ENCODE measurements at regions of chr2 and their contacts with region 1.

Region 1: DNA sequence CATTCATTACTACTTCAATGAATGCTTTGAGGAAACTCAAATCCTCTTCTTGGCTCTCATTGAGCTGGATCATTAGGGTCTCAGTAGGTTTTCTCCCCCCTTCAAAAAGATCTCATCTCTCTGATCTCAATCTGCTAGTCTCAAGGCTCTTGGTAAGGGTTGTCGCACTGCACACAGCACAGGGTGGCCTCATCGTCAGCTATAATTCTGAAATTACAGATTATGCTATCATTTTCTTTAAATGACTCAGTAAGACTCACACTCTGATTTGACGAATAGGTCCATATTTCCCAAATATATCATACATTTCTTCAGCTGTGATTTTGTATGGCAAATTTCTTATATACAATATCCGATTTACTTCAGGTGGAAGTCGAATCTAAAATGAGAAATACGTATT is 2.3 kb downstream of the SF3B6 start:
- DNase-seq: no peak
- H3K4me3 Mint-ChIP-seq: no peak overlapping the region
- H3K27ac Mint-ChIP-seq: no peak overlapping the region
- H3K4me1 Mint-ChIP-seq: peaks cover 36% of the 10 kb centered on the region
- H3K27me3 Mint-ChIP-seq: no peaks in the 10 kb centered on the region

Region 2: DNA sequence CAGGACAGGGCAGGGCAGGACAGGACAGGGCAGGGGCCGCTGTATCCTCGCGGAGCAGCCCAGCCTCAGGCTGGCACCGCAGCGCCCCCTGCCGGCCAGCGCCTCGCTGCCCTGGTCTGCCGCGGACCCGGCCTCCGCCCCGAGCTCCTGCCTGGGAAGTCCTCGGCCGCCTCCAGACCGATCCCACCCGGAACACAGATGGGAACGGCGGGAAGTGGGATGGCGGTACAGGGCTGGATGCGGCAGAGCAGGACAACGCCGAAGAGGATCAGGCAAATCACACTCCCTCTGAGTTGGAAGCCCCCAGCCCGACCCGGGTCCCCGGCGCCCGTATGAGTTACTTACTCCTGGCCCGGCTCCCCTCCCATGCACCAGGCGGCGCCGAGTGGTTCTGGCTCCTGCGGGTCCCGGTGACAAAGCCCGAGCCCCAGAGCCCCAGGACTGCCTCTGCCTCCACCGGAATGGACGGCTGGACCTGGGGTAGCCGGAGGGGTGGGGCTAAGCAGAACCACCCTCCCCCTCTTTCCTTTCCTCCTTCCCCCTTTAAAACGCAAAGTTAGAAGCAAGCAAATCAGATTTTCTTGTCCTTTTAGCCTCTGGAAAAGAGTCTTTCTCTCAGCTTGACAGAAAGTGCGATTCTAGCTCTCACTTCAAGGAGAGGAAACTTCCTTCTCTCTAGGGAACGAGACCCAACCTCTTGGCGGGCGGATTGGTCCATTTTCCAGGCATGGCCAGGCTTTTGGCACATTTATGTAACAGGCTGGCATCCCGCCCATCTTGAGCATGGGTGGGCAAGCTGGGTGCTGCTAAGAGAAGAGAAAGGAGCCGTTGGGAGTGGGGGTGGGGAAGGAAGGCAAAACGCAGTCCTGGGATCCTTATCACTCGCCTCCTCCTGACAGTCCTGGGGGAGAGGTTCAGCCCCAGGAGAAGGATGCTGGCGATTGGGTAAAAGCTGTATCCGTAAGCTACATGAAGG is 10.9 kb after region 1 on chr2 and contains the start of gene TP53I3:
- CTCF ChIA-PET with region 1: interaction called, 12 read pairs
- DNase-seq: peak; percentile 84
- H3K4me3 Mint-ChIP-seq: peak within 1 kb of the TSS; percentile 90
- H3K27ac Mint-ChIP-seq: peak within 1 kb of the TSS; percentile 93
- H3K4me1 Mint-ChIP-seq: peaks cover 16% of the 10 kb centered on the region
- H3K27me3 Mint-ChIP-seq: no peaks in the 10 kb centered on the region

Region 3: GRCh38 chr2:24105816-24106215 is 32.0 kb after region 1 on chr2:
- CTCF ChIA-PET with region 1: no interaction called
- DNase-seq: no peak
- H3K4me3 Mint-ChIP-seq: no peak overlapping the region
- H3K27ac Mint-ChIP-seq: no peak overlapping the region
- H3K4me1 Mint-ChIP-seq: no peaks in the 10 kb centered on the region
- H3K27me3 Mint-ChIP-seq: no peaks in the 10 kb centered on the region